WTC11 (cell line): ENCODE measurements at regions of chr3 and their contacts with region 1.

Region 1: DNA sequence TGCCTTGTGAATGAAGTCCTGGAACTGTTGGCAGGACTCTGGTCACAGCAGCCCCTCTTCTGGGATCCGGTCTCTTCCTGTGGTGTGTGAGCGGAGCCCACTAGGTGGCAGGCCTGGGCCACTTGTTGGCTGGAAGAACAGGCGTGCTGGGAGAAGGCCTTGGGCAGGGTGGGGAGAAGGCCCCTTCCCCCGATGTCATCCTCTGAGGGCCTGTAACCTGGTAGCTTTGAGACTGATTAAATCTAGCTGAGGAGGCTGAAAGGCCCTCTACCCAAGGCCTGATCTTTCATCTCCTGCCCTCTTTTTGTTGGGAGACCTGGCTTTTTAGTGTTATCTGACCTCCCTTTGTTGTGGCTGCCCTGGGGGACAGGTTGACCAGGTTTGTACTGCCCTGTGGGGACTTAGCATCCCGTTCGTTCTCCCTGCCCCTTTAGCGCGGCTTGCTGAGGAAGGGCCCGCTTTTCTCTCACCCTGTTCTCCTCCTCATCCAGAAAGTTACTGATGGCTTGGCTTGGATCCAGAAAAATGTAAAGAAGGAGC is 48.3 kb downstream of the CHCHD6 start:
- DNase-seq: peak; percentile 91
- ATAC-seq: peak; percentile 93
- H3K4me3 Mint-ChIP-seq: no peak overlapping the region
- H3K27ac Mint-ChIP-seq: peak overlapping the region; percentile 92
- H3K4me1 Mint-ChIP-seq: peaks cover 41% of the 10 kb centered on the region
- H3K27me3 Mint-ChIP-seq: no peaks in the 10 kb centered on the region
- CTCF ChIP-seq: peak; percentile 67

Region 2: DNA sequence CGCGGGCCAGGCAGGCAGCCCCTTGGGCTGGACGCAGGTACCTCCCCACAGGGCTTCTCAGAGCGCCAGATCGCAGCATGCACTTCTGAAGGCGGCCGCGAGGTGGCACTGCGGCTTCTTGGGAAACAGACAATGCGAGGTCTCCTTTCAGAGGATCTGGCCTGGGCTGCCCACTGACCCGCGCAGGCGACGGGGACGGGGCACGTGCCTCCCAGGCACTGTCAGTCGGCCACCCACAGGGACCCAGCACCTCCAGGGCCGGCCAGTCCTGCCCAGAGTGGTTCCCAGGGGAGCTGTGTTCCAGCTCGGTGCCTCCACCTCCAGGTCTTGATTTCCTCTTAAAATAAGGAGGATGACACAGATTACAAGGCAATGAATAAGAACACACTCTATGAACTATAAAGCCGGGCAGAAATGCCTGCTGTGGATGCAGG is 73.0 kb before region 1 on chr3:
- CTCF ChIA-PET with region 1: interaction called, 15 read pairs
- POLR2A ChIA-PET with region 1: no interaction called
- DNase-seq: peak; percentile 96
- ATAC-seq: peak; percentile 92
- H3K4me3 Mint-ChIP-seq: peak overlapping the region; percentile 54
- H3K27ac Mint-ChIP-seq: no peak overlapping the region
- H3K4me1 Mint-ChIP-seq: peaks cover 22% of the 10 kb centered on the region
- H3K27me3 Mint-ChIP-seq: peaks cover 31% of the 10 kb centered on the region
- CTCF ChIP-seq: peak; percentile 95

Region 3: DNA sequence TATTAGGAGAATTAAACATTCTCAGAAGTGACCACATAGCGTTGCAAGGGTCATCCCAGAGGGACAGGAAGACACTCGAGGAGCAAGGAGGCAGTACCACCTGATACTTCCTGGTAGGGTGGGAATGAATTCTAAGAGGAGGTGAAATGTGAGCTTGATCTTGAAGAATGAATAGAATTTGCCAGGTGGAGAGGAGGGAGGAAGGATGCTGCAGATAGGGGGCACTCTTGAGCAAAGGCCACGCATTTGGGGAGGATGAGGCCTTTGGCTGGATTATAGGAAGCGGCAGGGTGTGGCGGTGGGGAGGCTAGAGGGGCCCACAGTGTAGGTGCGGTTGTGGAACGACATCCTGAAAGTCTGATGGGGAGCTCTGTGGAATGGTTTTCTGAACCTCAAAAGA is 14.8 kb before region 1 on chr3:
- CTCF ChIA-PET with region 1: interaction called, 23 read pairs
- POLR2A ChIA-PET with region 1: no interaction called
- DNase-seq: peak; percentile 51
- ATAC-seq: peak; percentile 63
- H3K4me3 Mint-ChIP-seq: no peak overlapping the region
- H3K27ac Mint-ChIP-seq: no peak overlapping the region
- H3K4me1 Mint-ChIP-seq: no peaks in the 10 kb centered on the region; the same call in 1 of the 2 replicates
- H3K27me3 Mint-ChIP-seq: no peaks in the 10 kb centered on the region
- CTCF ChIP-seq: peak; percentile 36

Region 4: GRCh38 chr3:126850370-126851085 is 98.2 kb after region 1 on chr3:
- CTCF ChIA-PET with region 1: interaction called, 26 read pairs
- POLR2A ChIA-PET with region 1: interaction called, 6 read pairs
- DNase-seq: peak; percentile 72
- ATAC-seq: peak; percentile 90
- H3K4me3 Mint-ChIP-seq: 0 out of 2 replicates have a peak overlapping the region, but pooled peaks have one; percentile 4
- H3K27ac Mint-ChIP-seq: peak overlapping the region; percentile 97
- H3K4me1 Mint-ChIP-seq: peaks cover 60% of the 10 kb centered on the region
- H3K27me3 Mint-ChIP-seq: no peaks in the 10 kb centered on the region
- CTCF ChIP-seq: no peak

Region 5: DNA sequence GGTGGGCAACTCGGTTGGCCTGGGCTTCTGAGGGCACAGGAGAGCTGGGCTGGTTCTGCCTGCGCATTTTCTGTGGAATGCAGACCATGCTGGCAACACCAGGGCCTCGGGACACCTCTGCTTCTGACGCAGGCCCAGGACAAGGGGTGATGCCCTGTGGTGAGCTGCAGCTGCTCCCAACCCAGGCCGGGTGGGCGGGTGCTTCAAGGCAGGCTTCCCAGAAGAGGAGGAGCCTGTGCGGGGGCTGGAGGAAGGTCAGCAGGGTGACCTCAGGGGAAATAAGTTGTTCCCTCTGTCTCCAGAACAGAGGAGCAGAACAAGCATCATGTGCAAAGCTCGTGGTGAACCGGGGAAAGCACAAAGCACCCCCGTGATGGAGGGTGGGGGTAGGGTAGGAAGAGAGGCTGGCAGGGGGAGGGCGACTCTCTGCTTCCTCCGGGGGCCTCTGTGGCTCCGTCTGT is 219.5 kb after region 1 on chr3:
- CTCF ChIA-PET with region 1: interaction called, 17 read pairs
- POLR2A ChIA-PET with region 1: no interaction called
- DNase-seq: peak; percentile 38
- ATAC-seq: peak; percentile 74
- H3K4me3 Mint-ChIP-seq: no peak overlapping the region
- H3K27ac Mint-ChIP-seq: no peak overlapping the region
- H3K4me1 Mint-ChIP-seq: peaks cover 13% of the 10 kb centered on the region
- H3K27me3 Mint-ChIP-seq: peaks cover 5% of the 10 kb centered on the region
- CTCF ChIP-seq: no peak

Region 6: GRCh38 chr3:126982471-126983175 is 230.2 kb after region 1 on chr3 and contains the start of gene PLXNA1:
- CTCF ChIA-PET with region 1: interaction called, 34 read pairs
- POLR2A ChIA-PET with region 1: interaction called, 3 read pairs
- DNase-seq: peak; percentile 79
- ATAC-seq: peak; percentile 56
- H3K4me3 Mint-ChIP-seq: peak within 1 kb of the TSS; percentile 73
- H3K27ac Mint-ChIP-seq: no peak within 1 kb of the TSS
- H3K4me1 Mint-ChIP-seq: peaks cover 9% of the 10 kb centered on the region
- H3K27me3 Mint-ChIP-seq: peaks cover 21% of the 10 kb centered on the region
- CTCF ChIP-seq: peak; percentile 94
- total RNA-seq, gene PLXNA1: 53.0 to 55.0 TPM (median 53.8 TPM) in 3 replicates

Region 7: GRCh38 chr3:127002195-127003174 is 250.1 kb after region 1 on chr3:
- CTCF ChIA-PET with region 1: interaction called, 21 read pairs
- POLR2A ChIA-PET with region 1: no interaction called
- DNase-seq: peak; percentile 91
- ATAC-seq: peak; percentile 92
- H3K4me3 Mint-ChIP-seq: no peak overlapping the region
- H3K27ac Mint-ChIP-seq: peak overlapping the region; percentile 97
- H3K4me1 Mint-ChIP-seq: peaks cover 26% of the 10 kb centered on the region
- H3K27me3 Mint-ChIP-seq: no peaks in the 10 kb centered on the region
- CTCF ChIP-seq: no peak